AG04449 (cell line): ENCODE measurements at regions of chr20 and their contacts with region 1.

Region 1: DNA sequence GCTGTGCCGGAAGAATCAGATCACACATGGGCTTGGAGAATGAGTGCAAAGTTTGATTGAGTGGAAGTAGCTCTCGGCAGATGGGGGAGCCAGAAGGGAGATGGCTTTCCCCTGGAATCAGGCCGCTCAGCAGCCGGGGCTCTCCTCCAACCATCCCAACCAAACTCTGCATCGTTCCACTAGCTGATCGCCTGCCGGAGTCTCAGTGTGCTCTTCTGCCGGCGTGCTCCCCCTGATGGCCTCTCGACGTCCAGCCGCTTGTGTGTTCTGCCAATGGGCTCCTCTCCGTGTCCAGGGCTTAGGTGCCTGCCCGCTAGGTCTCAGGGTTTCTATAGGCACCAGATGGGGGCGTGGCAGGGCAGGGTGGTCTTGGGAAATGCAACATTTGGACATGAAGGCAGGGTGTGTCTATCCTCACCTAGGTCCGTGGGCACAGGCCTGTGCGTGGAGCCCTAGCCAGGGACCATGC is 4.9 kb upstream of the BIRC7 start:
- DNase-seq: no peak
- H3K4me3 ChIP-seq: no peak overlapping the region
- CTCF ChIP-seq: peak; percentile 79

Region 2: GRCh38 chr20:63216041-63216848 is 14.6 kb before region 1 on chr20 and contains the start of gene YTHDF1:
- CTCF ChIA-PET with region 1: interaction called, 73 read pairs
- POLR2A ChIA-PET with region 1: interaction called, 4 read pairs
- DNase-seq: peak; percentile 29
- H3K4me3 ChIP-seq: peak within 1 kb of the TSS; percentile 72
- CTCF ChIP-seq: no peak

Region 3: GRCh38 chr20:63246490-63247288 is 15.9 kb after region 1 on chr20:
- CTCF ChIA-PET with region 1: interaction called, 121 read pairs
- POLR2A ChIA-PET with region 1: no interaction called
- DNase-seq: no peak
- H3K4me3 ChIP-seq: no peak overlapping the region
- CTCF ChIP-seq: no peak